Astrocyte of the cerebellum (primary cell): ENCODE measurements at regions of chr1 and their contacts with region 1.

Region 1: GRCh38 chr1:43073490-43074230 is 98.4 kb downstream of the EBNA1BP2 start:
- DNase-seq: peak; percentile 51
- H3K4me3 ChIP-seq: no peak overlapping the region
- CTCF ChIP-seq: peak; percentile 73

Region 2: DNA sequence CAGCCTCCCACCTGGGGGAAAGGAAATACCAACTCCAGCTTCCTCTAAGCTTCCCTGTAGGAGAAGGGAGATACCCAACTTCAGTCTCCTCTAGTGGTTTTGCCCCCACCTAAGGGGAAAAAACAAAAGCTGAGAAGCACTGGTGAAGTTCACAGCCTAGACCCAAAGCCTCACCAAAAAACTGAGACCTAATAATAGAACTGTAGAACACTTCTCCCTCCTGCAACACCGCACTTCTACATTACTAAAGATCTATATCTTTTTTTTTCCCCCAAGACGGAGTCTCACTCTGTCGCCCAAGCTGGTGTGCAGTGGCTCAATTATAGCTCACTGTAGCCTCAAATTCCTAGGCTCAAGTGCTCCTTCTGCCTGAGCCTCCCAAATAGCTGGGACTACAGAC is 158.2 kb before region 1 on chr1:
- in situ Hi-C with region 1: loop called (anchors 5 kb)
- DNase-seq: no peak
- H3K4me3 ChIP-seq: no peak overlapping the region
- CTCF ChIP-seq: no peak

Region 3: GRCh38 chr1:42993631-42994121 is 80.0 kb before region 1 on chr1:
- in situ Hi-C with region 1: no loop called
- DNase-seq: no peak
- H3K4me3 ChIP-seq: no peak overlapping the region
- CTCF ChIP-seq: no peak